Activated B cell treated with CpG ODN at 0.5 μM for 24 hours (primary cell): ENCODE measurements at regions of chr3 and their contacts with region 1.

Region 1: DNA sequence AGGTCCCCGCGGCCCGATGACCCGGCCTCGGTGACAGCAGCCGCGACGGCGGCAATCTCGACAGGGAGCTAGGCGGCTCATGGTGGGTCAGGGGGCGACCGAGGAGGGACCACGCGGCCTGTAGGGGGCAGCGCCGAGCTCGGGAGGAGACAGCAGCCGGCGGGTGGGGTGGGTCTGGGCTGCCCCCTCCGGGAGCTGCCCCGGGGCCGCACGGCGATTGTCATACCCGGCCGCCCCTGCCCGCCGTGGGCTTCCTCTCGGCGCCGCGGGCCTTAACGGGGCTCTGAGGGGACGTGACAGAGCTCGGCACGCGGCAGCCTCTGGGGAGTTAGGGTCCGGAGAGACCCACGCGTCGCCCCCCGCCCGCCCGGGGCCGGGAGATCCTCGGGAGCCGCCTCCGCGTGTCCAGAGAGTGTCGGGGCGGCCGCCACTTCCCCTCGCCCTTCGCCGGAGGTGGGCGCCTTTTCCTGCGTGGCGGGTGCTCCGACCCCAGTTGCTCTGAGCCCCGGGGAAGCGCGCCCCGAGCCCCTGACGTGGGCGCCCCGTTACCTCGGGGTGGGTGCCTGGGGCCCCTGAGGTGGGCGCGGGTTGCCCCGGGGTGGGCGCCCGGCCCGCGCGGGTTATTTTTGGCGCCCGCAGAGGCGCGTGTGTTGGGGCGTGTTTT is 539 bp upstream of the PLCL2 start:
- DNase-seq: peak; percentile 76
- ATAC-seq: peak; percentile 62
- H3K4me3 Mint-ChIP-seq: peak overlapping the region; percentile 94
- H3K27ac Mint-ChIP-seq: peak overlapping the region; percentile 96
- H3K4me1 Mint-ChIP-seq: peaks cover 43% of the 10 kb centered on the region
- H3K27me3 Mint-ChIP-seq: no peaks in the 10 kb centered on the region
- CTCF ChIP-seq: no peak

Region 2: GRCh38 chr3:16828815-16829214 is 55.4 kb before region 1 on chr3:
- CTCF ChIA-PET with region 1: interaction called, 18 read pairs
- POLR2A ChIA-PET with region 1: interaction called, 6 read pairs
- intact Hi-C with region 1: loop called (anchors 1 kb)
- DNase-seq: no peak
- ATAC-seq: peak; percentile 60
- H3K4me3 Mint-ChIP-seq: no peak overlapping the region
- H3K27ac Mint-ChIP-seq: no peak overlapping the region
- H3K4me1 Mint-ChIP-seq: peaks cover 11% of the 10 kb centered on the region
- H3K27me3 Mint-ChIP-seq: no peaks in the 10 kb centered on the region
- CTCF ChIP-seq: no peak

Region 3: DNA sequence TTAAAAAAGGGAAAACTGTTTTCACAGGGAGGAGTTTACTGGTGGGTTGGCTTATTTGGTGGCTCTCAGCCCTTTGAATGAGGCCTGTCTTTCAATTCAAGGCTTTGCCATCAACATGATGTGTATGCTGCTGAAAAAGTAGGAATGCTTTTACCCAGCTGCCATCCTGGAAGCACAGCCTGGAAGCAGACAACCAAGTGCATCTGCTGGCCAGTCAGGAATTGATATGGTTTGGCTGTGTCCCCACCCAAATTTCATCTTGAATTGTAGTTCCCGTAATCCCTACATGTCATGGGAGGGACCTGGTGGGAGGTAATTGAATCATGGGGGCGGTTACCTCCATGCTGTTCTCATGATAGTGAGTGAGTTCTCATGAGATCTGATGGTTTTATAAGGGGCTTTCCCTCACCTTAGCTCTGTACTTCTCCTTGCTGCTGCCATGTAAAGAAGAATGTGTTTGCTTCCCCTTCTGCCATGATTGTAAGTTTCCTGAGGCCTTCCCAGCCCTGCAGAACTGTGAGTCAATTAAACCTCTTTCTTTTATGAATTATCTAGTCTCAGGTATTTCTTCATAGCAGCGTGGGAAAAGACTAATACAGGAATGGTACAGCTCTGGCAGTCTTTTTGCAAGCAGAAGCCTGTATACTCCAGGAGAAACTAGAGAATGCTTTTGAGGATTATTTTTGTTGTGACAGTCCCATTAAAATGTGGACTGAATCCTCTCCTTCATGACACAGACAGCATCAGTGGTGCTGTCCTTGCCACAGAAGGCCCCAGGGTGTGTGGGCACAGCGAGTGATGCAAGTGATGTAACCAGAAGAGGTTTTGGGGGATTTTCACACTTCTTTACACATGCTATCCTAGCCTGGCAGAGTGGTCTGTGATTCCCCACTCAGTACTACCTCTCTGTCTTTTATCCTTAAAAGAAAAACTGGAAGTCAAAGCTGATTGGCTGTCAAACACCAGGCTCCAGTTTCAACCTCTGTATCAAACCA is 20.5 kb after region 1 on chr3:
- CTCF ChIA-PET with region 1: interaction called, 3 read pairs
- POLR2A ChIA-PET with region 1: interaction called, 7 read pairs
- intact Hi-C with region 1: loop called (anchors 2 kb)
- DNase-seq: no peak
- ATAC-seq: peak; percentile 62
- H3K4me3 Mint-ChIP-seq: peak overlapping the region; percentile 47
- H3K27ac Mint-ChIP-seq: peak overlapping the region; percentile 84
- H3K4me1 Mint-ChIP-seq: peaks cover 87% of the 10 kb centered on the region
- H3K27me3 Mint-ChIP-seq: no peaks in the 10 kb centered on the region
- CTCF ChIP-seq: no peak

Region 4: GRCh38 chr3:17023006-17023664 is 138.9 kb after region 1 on chr3:
- CTCF ChIA-PET with region 1: interaction called, 24 read pairs
- POLR2A ChIA-PET with region 1: interaction called, 21 read pairs
- intact Hi-C with region 1: loop called (anchors 1 kb)
- DNase-seq: no peak
- ATAC-seq: peak; percentile 99
- H3K4me3 Mint-ChIP-seq: peak overlapping the region; percentile 49
- H3K27ac Mint-ChIP-seq: peak overlapping the region; percentile 89
- H3K4me1 Mint-ChIP-seq: peaks cover 43% of the 10 kb centered on the region
- H3K27me3 Mint-ChIP-seq: no peaks in the 10 kb centered on the region
- CTCF ChIP-seq: no peak

Region 5: GRCh38 chr3:17233398-17233800 is 349.2 kb after region 1 on chr3:
- CTCF ChIA-PET with region 1: interaction called, 13 read pairs
- POLR2A ChIA-PET with region 1: interaction called, 10 read pairs
- intact Hi-C with region 1: loop called (anchors 1 kb)
- DNase-seq: no peak
- ATAC-seq: peak; percentile 98
- H3K4me3 Mint-ChIP-seq: no peak overlapping the region
- H3K27ac Mint-ChIP-seq: no peak overlapping the region
- H3K4me1 Mint-ChIP-seq: peaks cover 19% of the 10 kb centered on the region
- H3K27me3 Mint-ChIP-seq: no peaks in the 10 kb centered on the region
- CTCF ChIP-seq: no peak

Region 6: GRCh38 chr3:17349093-17349492 is 464.9 kb after region 1 on chr3:
- CTCF ChIA-PET with region 1: no interaction called
- POLR2A ChIA-PET with region 1: no interaction called
- intact Hi-C with region 1: no loop called
- DNase-seq: no peak
- ATAC-seq: no peak
- H3K4me3 Mint-ChIP-seq: no peak overlapping the region
- H3K27ac Mint-ChIP-seq: no peak overlapping the region
- H3K4me1 Mint-ChIP-seq: no peaks in the 10 kb centered on the region
- H3K27me3 Mint-ChIP-seq: no peaks in the 10 kb centered on the region
- CTCF ChIP-seq: no peak